Activated CD4-positive, alpha-beta T cell treated with anti-CD3 and anti-CD28 coated beads, Interleukin-2, amount 10 ng/mL, durations not matched to agents 24 days and 14 days (primary cell): ENCODE measurements at regions of chr1 and their contacts with region 1.

Region 1: GRCh38 chr1:65235867-65236805 is 73.2 kb upstream of the DNAJC6 start:
- DNase-seq: no peak
- H3K4me3 Mint-ChIP-seq: no peak overlapping the region
- H3K27ac Mint-ChIP-seq: no peak overlapping the region
- H3K4me1 Mint-ChIP-seq: peaks cover 13% of the 10 kb centered on the region
- H3K27me3 Mint-ChIP-seq: peaks cover 17% of the 10 kb centered on the region

Region 2: GRCh38 chr1:65265651-65266351 is 29.7 kb after region 1 on chr1:
- intact Hi-C with region 1: no loop called
- DNase-seq: peak; percentile 83
- H3K4me3 Mint-ChIP-seq: peak overlapping the region; percentile 75
- H3K27ac Mint-ChIP-seq: no peak overlapping the region
- H3K4me1 Mint-ChIP-seq: peaks cover 23% of the 10 kb centered on the region
- H3K27me3 Mint-ChIP-seq: peaks cover 45% of the 10 kb centered on the region

Region 3: GRCh38 chr1:65459397-65459768 is 223.2 kb after region 1 on chr1:
- intact Hi-C with region 1: loop called (anchors 1 kb)
- DNase-seq: peak; percentile 71
- H3K4me3 Mint-ChIP-seq: no peak overlapping the region
- H3K27ac Mint-ChIP-seq: no peak overlapping the region
- H3K4me1 Mint-ChIP-seq: peaks cover 22% of the 10 kb centered on the region
- H3K27me3 Mint-ChIP-seq: no peaks in the 10 kb centered on the region

Region 4: GRCh38 chr1:65687428-65688214 is 451.5 kb after region 1 on chr1:
- intact Hi-C with region 1: loop called (anchors 1 kb)
- DNase-seq: peak; percentile 93
- H3K4me3 Mint-ChIP-seq: no peak overlapping the region
- H3K27ac Mint-ChIP-seq: no peak overlapping the region
- H3K4me1 Mint-ChIP-seq: peaks cover 5% of the 10 kb centered on the region
- H3K27me3 Mint-ChIP-seq: peaks cover 26% of the 10 kb centered on the region

Region 5: DNA sequence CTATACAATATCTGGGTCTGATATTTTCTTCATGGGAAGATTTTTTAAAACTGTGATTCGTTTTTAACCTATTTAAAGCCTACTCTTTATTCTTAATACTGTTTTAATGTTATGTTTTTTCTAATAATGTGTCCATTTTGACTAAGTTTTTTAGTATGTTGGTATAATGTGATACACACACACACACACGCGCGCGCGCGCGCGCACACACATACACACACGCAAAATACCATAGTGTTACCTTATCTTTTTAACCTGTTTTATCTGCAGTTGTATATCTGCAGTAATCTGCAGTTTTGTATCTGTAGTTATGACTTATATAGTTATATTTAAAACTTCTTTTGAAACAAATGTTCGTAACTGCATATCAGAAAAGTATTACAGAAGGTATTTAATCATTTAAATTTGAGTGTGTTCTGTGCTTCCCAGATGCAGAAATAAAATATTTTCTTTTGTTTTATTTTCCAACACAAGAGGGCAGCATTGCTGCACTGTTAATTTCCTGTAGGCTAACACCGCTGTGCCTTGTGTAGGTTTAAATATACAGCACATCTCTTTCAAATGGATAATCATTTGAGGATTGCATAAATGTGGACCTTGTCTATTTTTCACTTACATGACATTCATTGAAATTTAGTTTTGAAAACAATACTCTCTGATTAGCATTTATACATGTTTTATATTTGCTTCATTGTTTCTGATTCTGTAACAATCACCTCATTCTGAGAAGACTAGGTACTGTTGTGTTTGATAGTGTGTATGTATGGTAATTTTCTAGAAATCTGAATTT is 722.6 kb after region 1 on chr1:
- intact Hi-C with region 1: loop called (anchors 10 kb)
- DNase-seq: peak; percentile 82
- H3K4me3 Mint-ChIP-seq: no peak overlapping the region
- H3K27ac Mint-ChIP-seq: no peak overlapping the region
- H3K4me1 Mint-ChIP-seq: peaks cover 4% of the 10 kb centered on the region
- H3K27me3 Mint-ChIP-seq: peaks cover 3% of the 10 kb centered on the region